Activated CD4-positive, alpha-beta T cell treated with anti-CD3 and anti-CD28 coated beads, Interleukin-2, amount 10 ng/mL, durations not matched to agents 7 days and 5 days (primary cell): ENCODE measurements at regions of chr12 and their contacts with region 1.

Region 1: DNA sequence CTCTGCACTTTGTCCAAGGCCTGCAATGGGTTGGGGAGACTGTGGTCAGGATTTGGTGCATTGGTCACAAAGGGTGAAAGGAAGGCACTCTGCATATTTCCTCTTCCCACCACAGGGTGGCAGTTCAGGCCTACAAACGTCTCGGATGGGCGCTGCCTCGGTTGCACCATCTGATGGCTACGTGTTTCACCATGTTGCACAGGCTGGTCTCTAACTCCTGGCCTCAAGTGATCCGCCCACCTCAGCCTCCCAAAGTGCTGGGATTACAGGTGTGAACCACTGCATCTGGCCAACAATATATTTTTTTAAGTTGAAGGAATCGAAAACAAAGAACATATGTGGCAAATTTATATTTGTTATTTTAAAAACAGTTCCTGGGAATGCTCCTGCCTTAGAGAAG is 35.1 kb downstream of the TMBIM6 start:
- DNase-seq: peak; percentile 67
- H3K4me3 Mint-ChIP-seq: no peak overlapping the region
- H3K27ac Mint-ChIP-seq: no peak overlapping the region
- H3K4me1 Mint-ChIP-seq: peaks cover 13% of the 10 kb centered on the region
- H3K27me3 Mint-ChIP-seq: peaks cover 14% of the 10 kb centered on the region

Region 2: GRCh38 chr12:49636574-49636973 is 139.8 kb before region 1 on chr12:
- CTCF ChIA-PET with region 1: no interaction called
- POLR2A ChIA-PET with region 1: no interaction called
- DNase-seq: no peak
- H3K4me3 Mint-ChIP-seq: no peak overlapping the region
- H3K27ac Mint-ChIP-seq: no peak overlapping the region
- H3K4me1 Mint-ChIP-seq: peaks cover 12% of the 10 kb centered on the region
- H3K27me3 Mint-ChIP-seq: no peaks in the 10 kb centered on the region

Region 3: GRCh38 chr12:49763006-49763591 is 13.3 kb before region 1 on chr12:
- CTCF ChIA-PET with region 1: interaction called, 17 read pairs
- POLR2A ChIA-PET with region 1: no interaction called
- DNase-seq: peak; percentile 81
- H3K4me3 Mint-ChIP-seq: peak overlapping the region; percentile 8
- H3K27ac Mint-ChIP-seq: peak overlapping the region; percentile 83
- H3K4me1 Mint-ChIP-seq: peaks cover 53% of the 10 kb centered on the region
- H3K27me3 Mint-ChIP-seq: no peaks in the 10 kb centered on the region

Region 4: DNA sequence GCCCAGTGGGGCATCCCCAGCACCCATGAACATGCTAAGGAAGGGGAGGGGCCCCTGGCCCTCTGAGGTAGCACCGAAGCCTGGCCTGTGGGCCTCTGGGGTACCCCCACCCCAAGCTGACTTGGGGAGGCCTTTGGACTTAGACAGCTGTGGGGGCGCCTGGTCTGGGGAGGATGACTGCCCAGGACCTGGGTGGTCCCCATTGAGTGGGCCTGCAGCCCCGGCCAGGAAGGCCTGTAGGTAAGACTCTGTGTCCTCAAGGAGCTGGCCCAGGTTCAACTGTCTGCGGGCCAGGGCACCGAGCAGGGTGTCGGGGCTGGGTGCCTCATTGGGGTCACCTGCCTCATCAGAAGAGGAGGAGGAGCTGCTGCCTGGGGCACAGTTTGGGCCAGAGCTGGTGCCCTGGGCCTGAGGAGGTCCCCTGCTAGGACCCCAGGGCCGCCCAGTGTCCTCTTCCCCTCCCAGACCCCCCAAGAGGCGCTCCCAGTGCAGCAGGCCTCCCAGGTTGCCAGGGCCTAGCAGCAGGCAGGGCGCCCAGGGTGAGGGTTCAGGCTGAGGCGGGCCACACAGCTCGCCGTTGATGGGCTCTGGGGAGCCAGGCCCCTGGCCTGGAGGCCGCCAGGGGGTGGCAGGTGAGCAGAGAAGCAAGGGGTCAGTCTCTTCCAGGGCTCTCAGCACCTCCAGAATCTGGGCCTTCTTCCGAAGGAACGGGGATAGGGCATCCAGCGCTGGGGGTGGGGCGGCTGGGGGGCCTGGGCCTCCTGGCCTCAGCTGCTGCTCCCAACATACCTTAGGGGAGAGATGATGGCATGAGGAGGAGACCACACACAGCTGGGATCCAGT is 20.4 kb after region 1 on chr12:
- CTCF ChIA-PET with region 1: interaction called, 13 read pairs
- POLR2A ChIA-PET with region 1: no interaction called
- DNase-seq: no peak
- H3K4me3 Mint-ChIP-seq: no peak overlapping the region
- H3K27ac Mint-ChIP-seq: no peak overlapping the region
- H3K4me1 Mint-ChIP-seq: no peaks in the 10 kb centered on the region
- H3K27me3 Mint-ChIP-seq: no peaks in the 10 kb centered on the region

Region 5: GRCh38 chr12:49838973-49839633 is 62.7 kb after region 1 on chr12:
- CTCF ChIA-PET with region 1: interaction called, 11 read pairs
- POLR2A ChIA-PET with region 1: no interaction called
- DNase-seq: peak; percentile 59
- H3K4me3 Mint-ChIP-seq: no peak overlapping the region
- H3K27ac Mint-ChIP-seq: no peak overlapping the region
- H3K4me1 Mint-ChIP-seq: peaks cover 29% of the 10 kb centered on the region
- H3K27me3 Mint-ChIP-seq: no peaks in the 10 kb centered on the region

Region 6: GRCh38 chr12:50025187-50026059 is 249.0 kb after region 1 on chr12 and contains the start of gene RACGAP1:
- CTCF ChIA-PET with region 1: no interaction called
- POLR2A ChIA-PET with region 1: no interaction called
- DNase-seq: peak; percentile 99
- H3K4me3 Mint-ChIP-seq: peak within 1 kb of the TSS; percentile 91
- H3K27ac Mint-ChIP-seq: peak within 1 kb of the TSS; percentile 98
- H3K4me1 Mint-ChIP-seq: peaks cover 43% of the 10 kb centered on the region
- H3K27me3 Mint-ChIP-seq: no peaks in the 10 kb centered on the region
- total RNA-seq, gene RACGAP1: 177 to 183 TPM